GM12878 (cell line): ENCODE measurements at regions of chr17 and their contacts with region 1.

Region 1: DNA sequence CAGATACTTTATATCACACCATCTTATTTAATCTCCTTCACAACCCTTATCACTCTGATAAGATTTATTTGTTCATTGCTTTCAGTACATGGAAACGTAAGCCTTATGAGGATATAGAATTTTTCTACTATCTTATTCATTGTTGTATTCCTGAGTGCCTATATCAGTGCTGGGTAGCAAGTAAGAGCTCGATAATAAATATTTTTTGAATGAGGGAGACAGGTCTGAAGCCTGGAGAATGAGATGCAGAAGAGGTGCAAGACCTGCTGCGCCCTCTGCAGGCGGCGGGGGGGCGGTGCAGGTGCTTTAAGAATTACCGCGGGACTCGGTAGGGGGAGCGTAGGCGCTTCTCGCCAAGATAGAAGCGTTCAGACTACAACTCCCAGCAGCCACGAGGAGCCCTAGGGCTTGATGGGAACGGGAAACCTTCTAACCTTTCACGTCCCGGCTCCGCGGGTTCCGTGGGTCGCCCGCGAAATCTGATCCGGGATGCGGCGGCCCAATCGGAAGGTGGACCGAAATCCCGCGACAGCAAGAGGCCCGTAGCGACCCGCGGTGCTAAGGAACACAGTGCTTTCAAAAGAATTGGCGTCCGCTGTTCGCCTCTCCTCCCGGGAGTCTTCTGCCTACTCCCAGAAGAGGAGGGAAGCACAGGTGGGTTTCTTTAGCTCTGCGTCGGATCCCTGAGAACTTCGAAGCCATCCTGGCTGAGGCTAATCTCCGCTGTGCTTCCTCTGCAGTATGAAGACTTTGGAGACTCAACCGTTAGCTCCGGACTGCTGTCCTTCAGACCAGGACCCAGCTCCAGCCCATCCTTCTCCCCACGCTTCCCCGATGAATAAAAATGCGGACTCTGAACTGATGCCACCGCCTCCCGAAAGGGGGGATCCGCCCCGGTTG is at the start of gene WRAP53:
- DNase-seq: peak; percentile 85
- ATAC-seq: peak; percentile 90
- H3K4me3 ChIP-seq: peak within 1 kb of the TSS; percentile 92
- H3K27ac ChIP-seq: peak within 1 kb of the TSS; percentile 100
- H3K4me1 ChIP-seq: peaks cover 12% of the 10 kb centered on the region
- H3K27me3 ChIP-seq: no peaks in the 10 kb centered on the region
- CTCF ChIP-seq: peak; percentile 97 to 99 (median 99)
- EP300 ChIP-seq: peak in 1 of 2 experiments; percentile 22; a peak in 1 of 4 replicates
- POLR2A ChIP-seq: peak; percentile 61
- RAD21 ChIP-seq: peak; percentile 78
- polyA plus RNA-seq, gene WRAP53: 1.9 to 5.3 TPM

Region 2: GRCh38 chr17:7403977-7404736 is 284.0 kb before region 1 on chr17 and contains the start of gene TMEM256:
- CTCF ChIA-PET with region 1: interaction called, 3 read pairs
- POLR2A ChIA-PET with region 1: interaction called, 12 read pairs
- RAD21 ChIA-PET with region 1: interaction called, 4 read pairs
- SMC1A ChIA-PET with region 1: interaction called, 3 read pairs
- in situ Hi-C with region 1: no loop called
- intact Hi-C with region 1: no loop called
- DNase-seq: peak; percentile 92
- ATAC-seq: peak; percentile 99
- H3K4me3 ChIP-seq: peak within 1 kb of the TSS; percentile 85
- H3K27ac ChIP-seq: peak within 1 kb of the TSS; percentile 80
- H3K4me1 ChIP-seq: peaks cover 3% of the 10 kb centered on the region; the same call in 1 of the 2 replicates
- H3K27me3 ChIP-seq: peaks cover 0 to 6% of the 10 kb centered on the region in 2 experiments; a peak in 2 of 4 replicates
- CTCF ChIP-seq: no peak
- EP300 ChIP-seq: no peak
- POLR2A ChIP-seq: peak; percentile 95
- RAD21 ChIP-seq: no peak
- polyA plus RNA-seq, gene TMEM256: 210 to 246 TPM

Region 3: GRCh38 chr17:7515911-7516610 is 172.1 kb before region 1 on chr17:
- CTCF ChIA-PET with region 1: interaction called, 22 read pairs
- POLR2A ChIA-PET with region 1: no interaction called
- RAD21 ChIA-PET with region 1: interaction called, 6 read pairs
- SMC1A ChIA-PET with region 1: interaction called, 8 read pairs
- in situ Hi-C with region 1: no loop called
- intact Hi-C with region 1: no loop called
- DNase-seq: no peak
- ATAC-seq: no peak
- H3K4me3 ChIP-seq: no peak overlapping the region
- H3K27ac ChIP-seq: no peak overlapping the region
- H3K4me1 ChIP-seq: no peaks in the 10 kb centered on the region
- H3K27me3 ChIP-seq: no peaks in the 10 kb centered on the region
- CTCF ChIP-seq: no peak
- EP300 ChIP-seq: no peak
- POLR2A ChIP-seq: no peak
- RAD21 ChIP-seq: no peak

Region 4: GRCh38 chr17:7589204-7589868 is 98.8 kb before region 1 on chr17:
- CTCF ChIA-PET with region 1: interaction called, 46 read pairs
- POLR2A ChIA-PET with region 1: interaction called, 31 read pairs
- RAD21 ChIA-PET with region 1: interaction called, 43 read pairs
- SMC1A ChIA-PET with region 1: interaction called, 42 read pairs
- in situ Hi-C with region 1: no loop called
- intact Hi-C with region 1: no loop called
- DNase-seq: no peak
- ATAC-seq: peak; percentile 86
- H3K4me3 ChIP-seq: no peak overlapping the region
- H3K27ac ChIP-seq: no peak overlapping the region
- H3K4me1 ChIP-seq: peaks cover 3% of the 10 kb centered on the region; the same call in 1 of the 2 replicates
- H3K27me3 ChIP-seq: no peaks in the 10 kb centered on the region
- CTCF ChIP-seq: peak; percentile 55 to 72 (median 65); a peak in 5 of 6 replicates
- EP300 ChIP-seq: no peak
- POLR2A ChIP-seq: no peak
- RAD21 ChIP-seq: peak; percentile 42

Region 5: GRCh38 chr17:7632492-7632894 is 55.7 kb before region 1 on chr17:
- CTCF ChIA-PET with region 1: interaction called, 128 read pairs
- POLR2A ChIA-PET with region 1: interaction called, 33 read pairs
- RAD21 ChIA-PET with region 1: interaction called, 30 read pairs
- SMC1A ChIA-PET with region 1: interaction called, 20 read pairs
- in situ Hi-C with region 1: no loop called
- intact Hi-C with region 1: no loop called
- DNase-seq: no peak
- ATAC-seq: peak; percentile 77
- H3K4me3 ChIP-seq: no peak overlapping the region
- H3K27ac ChIP-seq: no peak overlapping the region
- H3K4me1 ChIP-seq: no peaks in the 10 kb centered on the region
- H3K27me3 ChIP-seq: no peaks in the 10 kb centered on the region
- CTCF ChIP-seq: peak; percentile 59 to 73 (median 60); a peak in 5 of 6 replicates
- EP300 ChIP-seq: no peak
- POLR2A ChIP-seq: no peak
- RAD21 ChIP-seq: peak; percentile 55

Region 6: GRCh38 chr17:7769854-7770253 is 81.7 kb after region 1 on chr17:
- CTCF ChIA-PET with region 1: no interaction called
- POLR2A ChIA-PET with region 1: no interaction called
- RAD21 ChIA-PET with region 1: no interaction called
- SMC1A ChIA-PET with region 1: no interaction called
- in situ Hi-C with region 1: no loop called
- intact Hi-C with region 1: no loop called
- DNase-seq: no peak
- ATAC-seq: no peak
- H3K4me3 ChIP-seq: no peak overlapping the region
- H3K27ac ChIP-seq: no peak overlapping the region
- H3K4me1 ChIP-seq: no peaks in the 10 kb centered on the region
- H3K27me3 ChIP-seq: peaks cover 3 to 4% of the 10 kb centered on the region in 2 experiments; a peak in 3 of 4 replicates
- CTCF ChIP-seq: no peak
- EP300 ChIP-seq: no peak
- POLR2A ChIP-seq: no peak
- RAD21 ChIP-seq: no peak